ENCODE measurements at regions of chr5 and their contacts with region 1.

Region 1: GRCh38 chr5:179914032-179914755 is 6.5 kb upstream of the TBC1D9B start:
- DNase-seq: no peak
- H3K4me3 ChIP-seq: no peak overlapping the region
- H3K27ac ChIP-seq: no peak overlapping the region
- H3K4me1 ChIP-seq: no peaks in the 10 kb centered on the region
- H3K27me3 ChIP-seq: no peaks in the 10 kb centered on the region
- CTCF ChIP-seq: no peak
- POLR2A ChIP-seq: no peak

Region 2: DNA sequence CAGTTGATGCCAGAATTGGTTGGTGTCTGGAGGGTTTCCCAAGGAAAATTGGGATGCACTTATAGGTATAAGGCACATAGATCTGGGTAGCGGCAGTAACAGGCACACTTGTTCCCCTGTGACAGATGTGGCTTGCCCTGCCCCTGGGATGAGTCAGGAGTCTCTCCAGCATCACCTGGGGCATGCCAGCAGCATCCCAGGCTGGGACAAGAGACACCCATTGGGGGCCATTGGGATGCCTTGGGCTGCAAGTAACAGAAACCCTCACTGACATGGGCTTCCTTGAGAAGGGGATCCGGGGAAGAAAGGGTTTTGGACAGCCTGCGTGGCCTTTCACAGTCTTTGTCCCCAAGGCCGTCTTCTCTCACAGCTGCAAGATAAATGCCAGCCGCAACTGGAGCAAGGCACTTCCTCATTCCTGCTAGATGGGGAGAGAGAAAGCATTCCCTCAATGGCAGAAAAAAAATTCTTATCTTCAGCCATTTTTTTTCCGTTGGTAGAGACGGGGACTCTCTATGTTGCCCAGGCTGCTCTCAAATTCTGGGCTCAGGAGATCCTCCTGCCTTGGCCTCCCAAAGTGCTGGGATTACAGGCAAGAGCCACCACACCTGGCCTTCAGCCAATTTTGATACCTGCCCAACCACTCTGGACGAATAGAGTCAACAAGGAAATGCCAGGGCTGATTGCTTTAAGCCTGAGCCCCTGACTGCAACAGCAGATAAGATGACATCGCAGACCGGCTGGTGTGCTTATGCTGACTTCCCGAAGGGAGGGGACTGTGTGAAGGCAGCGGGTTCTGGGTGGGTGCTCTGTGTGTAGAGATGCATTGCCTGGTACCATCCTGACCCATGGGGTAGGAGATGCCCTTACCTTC is 170.7 kb after region 1 on chr5:
- intact Hi-C with region 1: loop called (anchors 10 kb)
- DNase-seq: no peak
- H3K4me3 ChIP-seq: no peak overlapping the region
- H3K27ac ChIP-seq: no peak overlapping the region
- H3K4me1 ChIP-seq: no peaks in the 10 kb centered on the region
- H3K27me3 ChIP-seq: no peaks in the 10 kb centered on the region
- CTCF ChIP-seq: no peak
- POLR2A ChIP-seq: no peak